ENCODE measurements at regions of chr12 and their contacts with region 1.

Region 1: GRCh38 chr12:133037207-133038005 is at the start of gene ZNF84:
- DNase-seq: peak; percentile 88 to 92
- H3K4me3 ChIP-seq: peak within 1 kb of the TSS; percentile 80
- H3K27ac ChIP-seq: peak within 1 kb of the TSS; percentile 80
- H3K4me1 ChIP-seq: no peaks in the 10 kb centered on the region
- H3K27me3 ChIP-seq: no peaks in the 10 kb centered on the region; the same call in 1 of the 2 replicates
- CTCF ChIP-seq: no peak
- total RNA-seq, gene ZNF84: 16.2 and 18.0 TPM in 2 replicates

Region 2: GRCh38 chr12:132866251-132866828 is 171.1 kb before region 1 on chr12:
- CTCF ChIA-PET with region 1: no interaction called
- POLR2A ChIA-PET with region 1: no interaction called
- intact Hi-C with region 1: no loop called
- DNase-seq: no peak
- H3K4me3 ChIP-seq: no peak overlapping the region
- H3K27ac ChIP-seq: no peak overlapping the region
- H3K4me1 ChIP-seq: no peaks in the 10 kb centered on the region
- H3K27me3 ChIP-seq: no peaks in the 10 kb centered on the region
- CTCF ChIP-seq: no peak

Region 3: GRCh38 chr12:133057446-133057845 is 20.0 kb after region 1 on chr12:
- CTCF ChIA-PET with region 1: interaction called, 10 read pairs
- POLR2A ChIA-PET with region 1: no interaction called
- intact Hi-C with region 1: no loop called
- DNase-seq: no peak
- H3K4me3 ChIP-seq: no peak overlapping the region
- H3K27ac ChIP-seq: no peak overlapping the region
- H3K4me1 ChIP-seq: no peaks in the 10 kb centered on the region
- H3K27me3 ChIP-seq: no peaks in the 10 kb centered on the region
- CTCF ChIP-seq: no peak

Region 4: DNA sequence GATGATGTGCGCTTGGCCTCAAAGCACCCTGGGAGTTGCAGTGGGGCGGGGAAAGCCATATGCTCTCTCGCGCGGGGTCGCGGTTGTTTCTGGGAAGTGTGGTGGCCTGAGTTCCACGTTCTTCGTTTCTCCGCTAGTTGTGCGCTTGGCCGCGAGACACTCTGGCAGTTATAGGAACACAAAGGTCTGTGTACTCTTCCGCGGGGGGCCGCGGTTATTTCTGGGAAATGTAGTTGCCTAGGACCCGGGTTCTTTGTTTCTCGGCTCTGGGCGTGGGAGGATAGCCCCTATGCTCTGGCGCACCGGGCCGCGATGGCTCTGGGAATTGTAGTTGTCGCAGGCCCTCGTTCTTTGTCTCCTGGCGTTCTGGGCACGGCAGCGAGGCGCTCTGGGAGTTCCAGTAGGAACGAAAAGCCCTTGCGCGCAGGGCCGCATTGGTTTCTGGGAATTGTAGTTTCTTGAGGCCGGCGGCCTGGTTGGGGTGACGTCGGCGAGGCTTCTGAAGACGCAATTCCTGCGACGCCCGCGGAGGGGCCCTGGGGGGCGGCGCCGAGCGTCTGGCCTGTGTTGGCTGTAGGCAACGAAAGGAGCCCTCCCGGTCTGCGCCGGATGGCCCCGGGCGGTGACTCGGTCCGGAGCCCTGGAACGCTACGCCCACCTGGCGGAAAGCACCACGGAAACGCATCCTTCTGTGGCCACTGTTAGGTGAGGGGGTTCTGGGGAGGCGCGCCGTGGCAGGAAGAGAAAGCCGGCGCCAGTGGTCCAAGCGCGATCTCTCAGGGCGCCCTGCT is 43.2 kb after region 1 on chr12 and contains the start of gene ZNF140:
- CTCF ChIA-PET with region 1: no interaction called
- POLR2A ChIA-PET with region 1: no interaction called
- intact Hi-C with region 1: loop called (anchors 1 kb)
- DNase-seq: peak; percentile 87 to 92
- H3K4me3 ChIP-seq: peak within 1 kb of the TSS; percentile 85
- H3K27ac ChIP-seq: peak within 1 kb of the TSS; percentile 96
- H3K4me1 ChIP-seq: peaks cover 7% of the 10 kb centered on the region; the same call in 1 of the 2 replicates
- H3K27me3 ChIP-seq: no peaks in the 10 kb centered on the region
- CTCF ChIP-seq: peak; percentile 42; the same call in 1 of the 2 replicates
- total RNA-seq, gene ZNF140: 10.2 and 11.1 TPM in 2 replicates